Sigmoid colon (tissue), 7 donors: ENCODE measurements at regions of chr16 and their contacts with region 1.

Region 1: GRCh38 chr16:72664509-72665225 is 383.3 kb downstream of the ZFHX3 start:
- DNase-seq: peak; percentile 99
- H3K4me3 ChIP-seq: peak overlapping the region; percentile 80 to 86 (median 84)
- H3K27ac ChIP-seq: peak overlapping the region; percentile 57 to 72 (median 62)
- H3K4me1 ChIP-seq: peaks cover 0 to 18% (median 12%) of the 10 kb centered on the region in 4 donors
- H3K27me3 ChIP-seq: no peaks in the 10 kb centered on the region
- CTCF ChIP-seq: no peak
- EP300 ChIP-seq: no peak
- POLR2A ChIP-seq: no peak

Region 2: GRCh38 chr16:72008424-72009216 is 656.0 kb before region 1 on chr16 and contains the start of gene DHODH:
- intact Hi-C with region 1: loop called (anchors 10 kb)
- DNase-seq: peak; percentile 99
- H3K4me3 ChIP-seq: peak within 1 kb of the TSS; percentile 57 to 83 (median 70)
- H3K27ac ChIP-seq: peak within 1 kb of the TSS; percentile 52 to 74 (median 64)
- H3K4me1 ChIP-seq: peaks cover 0 to 4% (median 2%) of the 10 kb centered on the region in 4 donors
- H3K27me3 ChIP-seq: no peaks in the 10 kb centered on the region
- CTCF ChIP-seq: no peak
- EP300 ChIP-seq: peak in 1 of 4 donors; percentile 30
- POLR2A ChIP-seq: no peak
- total RNA-seq, gene DHODH: 3.2 to 7.4 (median 4.0) TPM

Region 3: GRCh38 chr16:72787514-72788268 is 123.0 kb after region 1 on chr16:
- intact Hi-C with region 1: loop called (anchors 10 kb)
- DNase-seq: peak; percentile 90
- H3K4me3 ChIP-seq: peak overlapping the region; percentile 24 to 50 (median 46)
- H3K27ac ChIP-seq: peak overlapping the region; percentile 51 to 71 (median 56)
- H3K4me1 ChIP-seq: peaks cover 0 to 22% (median 13%) of the 10 kb centered on the region in 4 donors
- H3K27me3 ChIP-seq: no peaks in the 10 kb centered on the region
- CTCF ChIP-seq: no peak
- EP300 ChIP-seq: peak in 2 of 4 donors; percentile 51 to 55
- POLR2A ChIP-seq: no peak

Region 4: GRCh38 chr16:72832621-72833248 is 168.1 kb after region 1 on chr16:
- intact Hi-C with region 1: loop called (anchors 10 kb)
- DNase-seq: peak; percentile 94
- H3K4me3 ChIP-seq: no peak overlapping the region
- H3K27ac ChIP-seq: peak overlapping the region; percentile 15 to 62 (median 46)
- H3K4me1 ChIP-seq: peaks cover 0 to 50% (median 38%) of the 10 kb centered on the region in 4 donors
- H3K27me3 ChIP-seq: no peaks in the 10 kb centered on the region
- CTCF ChIP-seq: peak; percentile 86 to 99 (median 88)
- EP300 ChIP-seq: no peak
- POLR2A ChIP-seq: no peak

Region 5: DNA sequence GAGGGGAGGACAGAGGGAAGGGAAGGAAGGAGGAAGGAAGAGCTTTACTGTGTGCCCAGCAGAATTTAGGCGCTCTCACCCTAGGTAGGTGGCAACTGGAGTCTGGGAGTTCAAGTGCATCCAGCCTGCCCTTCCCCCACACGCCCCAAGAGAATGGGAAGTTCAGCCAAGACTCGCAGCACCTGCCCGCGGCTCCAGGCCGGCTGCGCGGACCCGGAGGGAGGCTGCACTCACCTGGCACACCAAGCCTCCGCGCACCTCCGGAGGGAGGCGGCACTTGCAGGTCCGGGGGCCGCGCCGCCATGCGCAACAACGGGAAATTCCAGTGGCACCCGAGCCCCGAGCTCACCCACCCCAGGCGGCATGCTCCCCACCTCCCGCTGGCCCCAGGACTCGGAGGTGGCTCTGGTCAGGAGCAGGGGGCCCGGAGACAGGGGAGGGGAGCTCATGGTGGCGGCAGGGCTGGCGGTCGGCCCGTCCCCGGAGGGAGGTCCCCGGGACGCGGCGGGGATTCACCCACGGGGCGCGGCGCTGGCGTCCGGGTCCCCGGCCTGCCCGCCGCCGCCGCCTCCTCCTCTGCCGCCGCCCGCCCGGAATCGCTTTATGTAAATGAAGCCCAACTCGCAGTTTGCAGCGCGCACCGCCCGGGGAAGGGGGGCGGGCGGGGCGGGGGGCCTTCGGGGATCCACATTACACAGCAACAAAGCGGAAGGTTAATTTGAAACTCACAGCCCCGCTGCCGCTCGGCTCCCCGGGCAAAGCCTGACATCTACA is 383.0 kb after region 1 on chr16 and contains the start of gene ZFHX3:
- intact Hi-C with region 1: loop called (anchors 10 kb)
- DNase-seq: peak; percentile 90
- H3K4me3 ChIP-seq: peak within 1 kb of the TSS; percentile 78 to 90 (median 84)
- H3K27ac ChIP-seq: peak within 1 kb of the TSS; percentile 94 to 99 (median 97)
- H3K4me1 ChIP-seq: peaks cover 3 to 92% (median 88%) of the 10 kb centered on the region in 4 donors
- H3K27me3 ChIP-seq: no peaks in the 10 kb centered on the region
- CTCF ChIP-seq: no peak
- EP300 ChIP-seq: no peak
- POLR2A ChIP-seq: peak in 1 of 2 donors; percentile 20
- total RNA-seq, gene ZFHX3: 17.8 to 38.8 (median 19.1) TPM

Region 6: DNA sequence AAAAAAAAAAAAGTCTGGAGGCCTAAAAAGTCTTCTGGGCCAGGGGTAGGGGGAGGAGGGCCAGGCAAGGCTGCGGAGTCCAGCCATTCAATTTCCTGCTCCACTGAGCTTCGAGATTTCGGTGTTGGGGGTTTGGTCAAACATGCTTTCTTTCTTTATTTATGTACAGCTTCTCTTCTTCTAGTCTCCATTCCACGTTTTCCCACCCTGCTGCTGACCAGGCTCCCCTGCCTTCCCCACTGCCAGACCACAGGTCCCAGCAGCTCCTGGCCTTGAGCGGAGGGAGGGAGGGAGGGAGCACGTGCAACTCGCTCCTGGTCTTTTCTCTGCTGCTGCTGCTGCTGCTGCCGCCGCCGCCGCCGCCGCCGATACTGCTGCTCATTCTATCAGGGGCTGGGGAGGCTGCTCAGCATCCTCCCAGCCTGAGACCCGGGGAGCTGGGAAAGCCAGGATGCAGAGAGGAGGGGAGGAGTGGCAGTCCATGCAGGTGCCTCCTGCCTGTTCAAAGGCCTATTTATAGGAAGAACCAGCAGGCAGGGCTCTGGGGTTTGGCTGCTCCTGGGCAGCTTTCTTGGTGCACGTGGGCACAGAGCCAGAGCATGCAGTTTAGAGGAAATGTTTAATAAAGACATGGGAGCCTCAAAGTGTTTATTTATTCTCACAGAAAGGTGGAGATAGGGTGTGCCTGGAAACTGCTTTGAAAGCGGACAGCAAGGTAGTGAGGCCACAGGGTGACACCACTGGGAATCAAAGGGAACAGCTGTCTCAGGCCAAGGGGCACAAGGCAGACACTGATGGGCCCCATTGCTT is 406.7 kb after region 1 on chr16:
- intact Hi-C with region 1: loop called (anchors 10 kb)
- DNase-seq: peak; percentile 87
- H3K4me3 ChIP-seq: peak overlapping the region in 3 of 4 donors; percentile 29 to 37 (median 30)
- H3K27ac ChIP-seq: peak overlapping the region; percentile 78 to 98 (median 89)
- H3K4me1 ChIP-seq: peaks cover 0 to 53% (median 46%) of the 10 kb centered on the region in 4 donors
- H3K27me3 ChIP-seq: peaks cover 0 to 8% (median 0%) of the 10 kb centered on the region in 3 donors
- CTCF ChIP-seq: no peak
- EP300 ChIP-seq: no peak
- POLR2A ChIP-seq: no peak